HepG2 (cell line): ENCODE measurements at regions of chr2 and their contacts with region 1.

Region 1: GRCh38 chr2:113965644-113966043 is 75.8 kb downstream of the ACTR3 start:
- DNase-seq: peak; percentile 94
- ATAC-seq: peak; percentile 94
- H3K4me3 ChIP-seq: no peak overlapping the region
- H3K27ac ChIP-seq: peak overlapping the region; percentile 79
- H3K4me1 ChIP-seq: peaks cover 43% of the 10 kb centered on the region
- H3K27me3 ChIP-seq: no peaks in the 10 kb centered on the region
- CTCF ChIP-seq: peak; percentile 97
- EP300 ChIP-seq: peak in 1 of 2 experiments; percentile 48; a peak in 1 of 4 replicates
- POLR2A ChIP-seq: no peak
- RAD21 ChIP-seq: peak; percentile 87

Region 2: GRCh38 chr2:113910110-113910717 is 55.4 kb before region 1 on chr2:
- CTCF ChIA-PET with region 1: no interaction called
- POLR2A ChIA-PET with region 1: no interaction called
- in situ Hi-C with region 1: no loop called
- intact Hi-C with region 1: no loop called
- DNase-seq: no peak
- ATAC-seq: peak; percentile 37
- H3K4me3 ChIP-seq: no peak overlapping the region
- H3K27ac ChIP-seq: no peak overlapping the region
- H3K4me1 ChIP-seq: peaks cover 29% of the 10 kb centered on the region
- H3K27me3 ChIP-seq: no peaks in the 10 kb centered on the region
- CTCF ChIP-seq: no peak
- EP300 ChIP-seq: no peak
- POLR2A ChIP-seq: no peak
- RAD21 ChIP-seq: no peak

Region 3: GRCh38 chr2:114022360-114023085 is 56.9 kb after region 1 on chr2:
- CTCF ChIA-PET with region 1: no interaction called
- POLR2A ChIA-PET with region 1: no interaction called
- in situ Hi-C with region 1: no loop called
- intact Hi-C with region 1: no loop called
- DNase-seq: peak; percentile 67
- ATAC-seq: peak; percentile 87
- H3K4me3 ChIP-seq: no peak overlapping the region
- H3K27ac ChIP-seq: no peak overlapping the region
- H3K4me1 ChIP-seq: peaks cover 42% of the 10 kb centered on the region
- H3K27me3 ChIP-seq: peaks cover 0 to 2% of the 10 kb centered on the region in 2 experiments; a peak in 2 of 5 replicates
- CTCF ChIP-seq: no peak
- EP300 ChIP-seq: peak in 1 of 2 experiments; percentile 63; a peak in 2 of 4 replicates
- POLR2A ChIP-seq: no peak
- RAD21 ChIP-seq: no peak

Region 4: GRCh38 chr2:114201781-114202180 is 236.1 kb after region 1 on chr2:
- CTCF ChIA-PET with region 1: interaction called, 3 read pairs
- POLR2A ChIA-PET with region 1: no interaction called
- in situ Hi-C with region 1: no loop called
- intact Hi-C with region 1: loop called (anchors 1 kb)
- DNase-seq: peak; percentile 28
- ATAC-seq: peak; percentile 77
- H3K4me3 ChIP-seq: no peak overlapping the region
- H3K27ac ChIP-seq: no peak overlapping the region
- H3K4me1 ChIP-seq: no peaks in the 10 kb centered on the region
- H3K27me3 ChIP-seq: no peaks in the 10 kb centered on the region
- CTCF ChIP-seq: peak; percentile 59
- EP300 ChIP-seq: no peak
- POLR2A ChIP-seq: no peak
- RAD21 ChIP-seq: no peak

Region 5: GRCh38 chr2:114543236-114543766 is 577.7 kb after region 1 on chr2:
- CTCF ChIA-PET with region 1: no interaction called
- POLR2A ChIA-PET with region 1: no interaction called
- in situ Hi-C with region 1: no loop called
- intact Hi-C with region 1: loop called (anchors 2 kb)
- DNase-seq: peak; percentile 68
- ATAC-seq: peak; percentile 86
- H3K4me3 ChIP-seq: no peak overlapping the region
- H3K27ac ChIP-seq: no peak overlapping the region
- H3K4me1 ChIP-seq: peaks cover 28% of the 10 kb centered on the region
- H3K27me3 ChIP-seq: no peaks in the 10 kb centered on the region
- CTCF ChIP-seq: peak; percentile 64
- EP300 ChIP-seq: no peak
- POLR2A ChIP-seq: no peak
- RAD21 ChIP-seq: no peak